Gastrocnemius medialis (tissue), 4 donors: ENCODE measurements at regions of chr12 and their contacts with region 1.

Region 1: DNA sequence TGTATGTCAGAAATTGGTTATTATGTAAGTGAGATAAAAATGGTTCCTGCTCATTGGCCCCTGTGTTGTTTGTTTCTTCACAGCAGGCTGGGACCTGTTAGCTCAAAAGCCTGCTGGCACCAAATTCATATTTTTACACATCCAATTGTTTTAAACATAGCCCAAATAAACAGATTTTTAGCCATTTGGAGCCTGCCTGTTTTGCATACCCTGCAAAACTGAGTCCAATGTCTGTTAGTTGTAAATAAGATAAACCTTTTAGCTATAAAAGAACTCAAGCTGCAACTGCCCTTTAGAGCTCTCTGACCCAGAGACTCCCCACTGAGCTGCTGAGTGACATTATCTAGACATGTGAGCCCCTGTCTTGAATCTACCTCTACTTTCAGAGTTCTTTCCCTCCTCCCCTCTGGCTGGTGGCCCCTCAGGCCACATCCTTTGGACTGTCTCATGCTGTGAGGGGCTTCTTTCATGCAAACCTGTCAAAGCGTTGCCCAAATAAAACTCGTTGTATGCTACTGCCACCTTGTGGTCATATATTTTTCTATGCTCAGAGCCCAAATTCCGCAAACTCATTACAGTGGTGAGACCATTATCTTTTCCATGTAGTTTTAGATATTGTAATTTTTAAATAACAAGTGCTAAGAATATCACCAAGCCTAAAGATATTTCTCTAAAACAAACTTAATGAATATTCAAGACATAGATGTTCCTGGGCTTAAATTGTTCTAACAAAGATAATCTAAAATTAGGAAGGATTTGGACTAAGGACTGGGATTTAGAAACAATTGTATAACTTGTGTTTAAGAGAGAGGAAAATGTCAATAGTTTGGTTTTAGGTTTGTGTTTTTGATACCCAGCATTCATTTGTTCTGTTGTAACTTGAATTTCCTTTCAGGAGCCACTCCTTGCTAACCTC is 337.9 kb downstream of the AACS start:
- DNase-seq: no peak
- ATAC-seq: no peak
- H3K4me3 ChIP-seq: no peak overlapping the region
- H3K27ac ChIP-seq: no peak overlapping the region
- H3K4me1 ChIP-seq: no peaks in the 10 kb centered on the region
- H3K27me3 ChIP-seq: no peaks in the 10 kb centered on the region
- CTCF ChIP-seq: peak in 4 of 5 experiments; percentile 14 to 47 (median 30)
- POLR2A ChIP-seq: no peak

Region 2: GRCh38 chr12:125240717-125241116 is 162.4 kb before region 1 on chr12:
- in situ Hi-C with region 1: no loop called
- intact Hi-C with region 1: loop called (anchors 2 kb)
- DNase-seq: no peak
- ATAC-seq: no peak
- H3K4me3 ChIP-seq: no peak overlapping the region
- H3K27ac ChIP-seq: no peak overlapping the region
- H3K4me1 ChIP-seq: peaks cover 0 to 3% of the 10 kb centered on the region in 2 donors
- H3K27me3 ChIP-seq: peaks cover 0 to 4% (median 0%) of the 10 kb centered on the region in 3 donors
- CTCF ChIP-seq: no peak
- POLR2A ChIP-seq: no peak

Region 3: DNA sequence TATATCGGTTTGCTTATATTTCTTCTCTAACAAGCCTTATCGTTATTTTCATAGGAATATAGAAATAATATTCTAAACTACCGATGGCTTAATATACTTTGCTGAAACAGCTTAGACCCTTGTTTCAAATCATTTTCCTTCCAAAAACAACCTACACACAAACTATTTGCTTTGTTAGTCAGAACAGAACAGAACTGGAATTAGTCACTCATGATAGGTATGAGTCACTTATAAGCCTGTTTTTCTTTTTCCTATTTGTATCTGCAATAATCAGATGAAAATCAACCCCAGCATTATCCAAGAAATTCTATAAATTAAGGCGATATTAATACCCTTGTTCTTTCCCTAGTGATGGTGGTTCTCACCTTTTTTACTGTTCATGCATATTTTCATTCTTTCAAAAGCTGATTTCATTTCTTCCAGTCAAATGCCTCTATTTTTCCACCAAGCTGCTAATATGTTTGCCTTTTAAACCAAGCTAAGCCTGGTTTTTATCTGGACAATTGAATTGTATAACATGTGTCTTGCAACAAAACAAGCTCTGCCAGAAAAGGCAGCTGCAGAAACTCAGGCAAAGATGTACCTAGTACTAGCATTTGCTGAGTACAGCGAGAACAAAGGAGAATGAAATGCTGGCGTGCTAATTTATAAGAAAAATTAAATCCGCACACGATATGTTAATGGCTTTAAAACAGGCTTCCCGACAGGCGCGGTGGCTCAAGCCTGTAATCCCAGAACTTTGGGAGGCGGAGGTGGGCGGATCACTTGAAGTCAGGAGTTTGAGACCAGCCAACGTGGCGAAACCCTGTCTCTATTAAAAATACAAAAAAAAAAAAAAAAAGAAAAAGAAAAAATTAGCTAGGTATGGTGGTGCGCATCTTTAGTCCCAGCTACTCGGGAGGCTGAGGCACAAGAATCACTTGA is 1080.3 kb after region 1 on chr12:
- in situ Hi-C with region 1: no loop called
- intact Hi-C with region 1: no loop called
- DNase-seq: no peak
- ATAC-seq: no peak
- H3K4me3 ChIP-seq: no peak overlapping the region
- H3K27ac ChIP-seq: no peak overlapping the region
- H3K4me1 ChIP-seq: no peaks in the 10 kb centered on the region
- H3K27me3 ChIP-seq: no peaks in the 10 kb centered on the region
- CTCF ChIP-seq: no peak
- POLR2A ChIP-seq: no peak